Transverse colon (tissue), 4 donors: ENCODE measurements at regions of chr5 and their contacts with region 1.

Region 1: DNA sequence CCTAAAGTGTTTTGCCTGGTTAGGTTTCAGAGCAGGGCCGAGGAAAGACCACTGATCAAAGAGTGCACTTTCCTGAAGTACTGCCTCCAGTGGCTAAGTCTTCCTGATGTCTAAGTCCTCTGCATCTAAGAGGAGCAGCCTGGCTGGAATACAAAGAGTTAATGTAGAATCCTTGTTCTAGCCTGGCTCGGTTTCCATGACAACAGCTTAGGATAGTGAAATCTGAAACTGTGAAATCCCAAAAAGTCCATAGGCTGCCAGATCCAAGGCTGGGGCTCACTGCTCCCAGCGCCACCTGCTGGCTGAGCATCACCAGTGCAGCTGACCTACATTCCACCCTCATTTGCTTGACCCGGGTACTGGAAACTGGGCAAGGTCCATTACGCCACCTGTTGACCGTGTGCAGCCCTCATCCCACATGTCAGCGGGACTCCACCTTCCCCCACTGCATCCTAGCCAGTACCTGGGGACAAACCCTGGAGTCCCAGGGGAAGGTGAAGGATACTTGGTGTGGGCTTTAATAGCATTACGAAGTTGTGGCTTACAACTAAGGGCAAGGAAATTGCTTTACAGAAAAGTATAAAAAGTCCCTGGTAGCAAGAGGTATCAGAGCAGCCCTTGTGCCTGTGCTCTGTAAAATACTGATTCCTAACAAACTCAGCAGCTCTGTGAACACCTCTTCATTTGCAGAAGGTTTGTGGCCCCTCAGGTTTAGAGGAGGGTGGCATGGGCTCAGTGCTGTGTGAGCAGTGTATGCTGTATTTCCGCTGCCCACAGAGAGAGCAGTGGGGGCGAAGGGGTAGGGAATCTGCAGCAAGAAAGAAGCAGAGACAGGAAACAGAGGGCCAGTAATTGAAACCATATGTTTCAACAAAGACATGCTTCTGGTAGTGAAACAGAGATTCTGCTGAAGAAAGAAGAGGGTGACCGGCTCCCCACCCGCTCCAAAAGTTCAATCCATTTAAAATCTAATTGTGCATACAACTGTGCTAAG is 36.0 kb downstream of the PCDHGC5 start:
- DNase-seq: peak; percentile 87
- H3K4me3 ChIP-seq: no peak overlapping the region
- H3K27ac ChIP-seq: peak overlapping the region; percentile 58 to 76 (median 64)
- H3K4me1 ChIP-seq: peaks cover 13 to 69% (median 29%) of the 10 kb centered on the region in 4 donors
- H3K27me3 ChIP-seq: no peaks in the 10 kb centered on the region
- CTCF ChIP-seq: peak; percentile 97 to 99 (median 99)
- EP300 ChIP-seq: no peak
- POLR2A ChIP-seq: no peak

Region 2: GRCh38 chr5:141402553-141403260 is 122.2 kb before region 1 on chr5 and contains the start of gene PCDHGA9:
- in situ Hi-C with region 1: no loop called
- intact Hi-C with region 1: loop called (anchors 10 kb)
- DNase-seq: no peak
- H3K4me3 ChIP-seq: peak within 1 kb of the TSS in 1 of 4 donors; percentile 32
- H3K27ac ChIP-seq: no peak within 1 kb of the TSS
- H3K4me1 ChIP-seq: no peaks in the 10 kb centered on the region
- H3K27me3 ChIP-seq: peaks cover 26% of the 10 kb centered on the region
- CTCF ChIP-seq: peak in 3 of 5 experiments; percentile 12 to 19 (median 19)
- EP300 ChIP-seq: no peak
- POLR2A ChIP-seq: no peak
- total RNA-seq, gene PCDHGA9: 1.2 to 4.6 (median 3.4) TPM

Region 3: GRCh38 chr5:143395638-143396352 is 1870.9 kb after region 1 on chr5:
- in situ Hi-C with region 1: no loop called
- intact Hi-C with region 1: no loop called
- DNase-seq: no peak
- H3K4me3 ChIP-seq: peak overlapping the region in 1 of 4 donors; percentile 4
- H3K27ac ChIP-seq: no peak overlapping the region
- H3K4me1 ChIP-seq: peaks cover 0 to 83% (median 17%) of the 10 kb centered on the region in 4 donors
- H3K27me3 ChIP-seq: no peaks in the 10 kb centered on the region
- CTCF ChIP-seq: no peak
- EP300 ChIP-seq: no peak
- POLR2A ChIP-seq: no peak